Right cardiac atrium (tissue), 5 donors: ENCODE measurements at regions of chr2 and their contacts with region 1.

Region 1: DNA sequence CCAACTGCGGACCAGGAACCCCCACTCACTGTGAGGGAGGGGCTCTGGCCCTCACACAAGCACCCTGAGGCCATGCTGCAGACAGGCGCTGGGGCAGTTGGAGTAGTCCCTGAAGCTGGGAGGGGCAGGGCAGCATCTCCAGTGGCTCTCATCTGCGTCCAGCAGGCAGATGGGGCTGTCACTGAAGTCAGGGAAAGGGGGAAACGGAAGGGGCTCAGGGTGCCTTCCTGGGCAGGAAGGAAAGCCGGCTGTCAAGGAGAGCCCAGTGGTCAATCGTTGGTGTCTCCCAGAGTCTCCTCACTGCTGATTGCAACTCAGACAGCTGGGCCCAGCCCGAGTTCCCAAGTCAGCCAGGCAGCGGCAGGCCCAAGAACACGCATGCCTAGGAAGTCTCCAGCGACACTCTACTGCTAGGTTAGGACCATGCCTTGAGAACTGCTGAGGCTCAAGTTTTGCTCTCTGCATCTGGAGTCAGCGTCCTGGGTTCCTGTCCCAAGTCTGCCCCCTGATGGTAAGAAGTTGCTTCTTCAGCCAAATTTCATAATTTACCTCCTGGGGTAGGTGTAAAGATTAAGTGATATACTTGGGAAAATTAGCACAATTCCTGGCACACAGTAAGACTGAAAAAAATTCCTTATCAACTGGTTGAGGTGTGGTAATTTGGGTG is 27.5 kb upstream of the NMUR1 start:
- DNase-seq: peak; percentile 71 to 90 (median 89)
- ATAC-seq: peak; percentile 91 to 95
- H3K4me3 ChIP-seq: no peak overlapping the region
- H3K27ac ChIP-seq: no peak overlapping the region
- H3K4me1 ChIP-seq: no peaks in the 10 kb centered on the region
- H3K27me3 ChIP-seq: no peaks in the 10 kb centered on the region

Region 2: GRCh38 chr2:231260442-231261208 is 297.1 kb before region 1 on chr2:
- intact Hi-C with region 1: no loop called
- DNase-seq: peak; percentile 25 to 60 (median 59)
- ATAC-seq: peak; percentile 38 to 71
- H3K4me3 ChIP-seq: no peak overlapping the region
- H3K27ac ChIP-seq: no peak overlapping the region
- H3K4me1 ChIP-seq: no peaks in the 10 kb centered on the region
- H3K27me3 ChIP-seq: no peaks in the 10 kb centered on the region

Region 3: GRCh38 chr2:231482806-231483391 is 74.8 kb before region 1 on chr2:
- intact Hi-C with region 1: loop called in 1 of 4 experiments (anchors 10 kb)
- DNase-seq: peak; percentile 81 to 92 (median 91)
- ATAC-seq: peak; percentile 92
- H3K4me3 ChIP-seq: peak overlapping the region; percentile 43
- H3K27ac ChIP-seq: peak overlapping the region; percentile 70
- H3K4me1 ChIP-seq: no peaks in the 10 kb centered on the region
- H3K27me3 ChIP-seq: no peaks in the 10 kb centered on the region

Region 4: DNA sequence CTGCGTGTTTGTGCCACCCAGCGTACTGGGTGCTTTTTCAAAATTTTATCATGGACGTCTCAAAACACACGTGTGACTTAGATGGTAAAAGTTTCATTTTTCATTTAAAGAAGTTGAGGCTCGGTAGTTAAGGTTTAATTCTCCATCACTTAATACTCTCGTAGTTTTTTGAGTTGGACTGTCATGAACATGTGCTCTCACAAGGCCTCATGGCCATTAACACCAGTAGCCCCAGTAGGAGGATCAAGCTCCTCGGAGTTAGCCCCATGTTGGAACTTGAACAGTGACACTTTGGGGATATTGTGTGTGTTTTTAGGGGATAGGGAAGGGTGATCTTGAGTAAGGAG is 42.8 kb before region 1 on chr2:
- intact Hi-C with region 1: loop called in 3 of 4 experiments (anchors 5 kb)
- DNase-seq: no peak
- ATAC-seq: no peak
- H3K4me3 ChIP-seq: peak overlapping the region; percentile 49
- H3K27ac ChIP-seq: peak overlapping the region; percentile 66
- H3K4me1 ChIP-seq: no peaks in the 10 kb centered on the region
- H3K27me3 ChIP-seq: no peaks in the 10 kb centered on the region

Region 5: GRCh38 chr2:231522799-231523180 is 34.9 kb before region 1 on chr2:
- intact Hi-C with region 1: loop called in 3 of 4 experiments (anchors 5 kb)
- DNase-seq: no peak
- ATAC-seq: no peak
- H3K4me3 ChIP-seq: no peak overlapping the region
- H3K27ac ChIP-seq: no peak overlapping the region
- H3K4me1 ChIP-seq: peaks cover 5% of the 10 kb centered on the region
- H3K27me3 ChIP-seq: no peaks in the 10 kb centered on the region

Region 6: GRCh38 chr2:232211743-232212686 is 654.3 kb after region 1 on chr2:
- intact Hi-C with region 1: no loop called
- DNase-seq: no peak
- ATAC-seq: no peak
- H3K4me3 ChIP-seq: no peak overlapping the region
- H3K27ac ChIP-seq: no peak overlapping the region
- H3K4me1 ChIP-seq: no peaks in the 10 kb centered on the region
- H3K27me3 ChIP-seq: no peaks in the 10 kb centered on the region

Region 7: GRCh38 chr2:232406571-232407310 is 849.0 kb after region 1 on chr2 and contains the start of gene ALPG:
- intact Hi-C with region 1: no loop called
- DNase-seq: no peak
- ATAC-seq: no peak
- H3K4me3 ChIP-seq: no peak within 1 kb of the TSS
- H3K27ac ChIP-seq: no peak within 1 kb of the TSS
- H3K4me1 ChIP-seq: no peaks in the 10 kb centered on the region
- H3K27me3 ChIP-seq: no peaks in the 10 kb centered on the region
- total RNA-seq, gene ALPG: not detected